ENCODE measurements at regions of chr12 and their contacts with region 1.

Region 1: GRCh38 chr12:91326058-91327027 is 143.7 kb upstream of the DCN start:
- DNase-seq: peak; percentile 13
- H3K4me3 Mint-ChIP-seq: no peak overlapping the region
- H3K27ac Mint-ChIP-seq: no peak overlapping the region
- H3K4me1 Mint-ChIP-seq: no peaks in the 10 kb centered on the region
- H3K27me3 Mint-ChIP-seq: peaks cover 2% of the 10 kb centered on the region

Region 2: GRCh38 chr12:90978117-90978770 is 348.1 kb before region 1 on chr12:
- CTCF ChIA-PET with region 1: interaction called, 9 read pairs
- POLR2A ChIA-PET with region 1: no interaction called
- intact Hi-C with region 1: loop called (anchors 1 kb)
- DNase-seq: no peak
- H3K4me3 Mint-ChIP-seq: no peak overlapping the region
- H3K27ac Mint-ChIP-seq: no peak overlapping the region
- H3K4me1 Mint-ChIP-seq: no peaks in the 10 kb centered on the region
- H3K27me3 Mint-ChIP-seq: no peaks in the 10 kb centered on the region

Region 3: DNA sequence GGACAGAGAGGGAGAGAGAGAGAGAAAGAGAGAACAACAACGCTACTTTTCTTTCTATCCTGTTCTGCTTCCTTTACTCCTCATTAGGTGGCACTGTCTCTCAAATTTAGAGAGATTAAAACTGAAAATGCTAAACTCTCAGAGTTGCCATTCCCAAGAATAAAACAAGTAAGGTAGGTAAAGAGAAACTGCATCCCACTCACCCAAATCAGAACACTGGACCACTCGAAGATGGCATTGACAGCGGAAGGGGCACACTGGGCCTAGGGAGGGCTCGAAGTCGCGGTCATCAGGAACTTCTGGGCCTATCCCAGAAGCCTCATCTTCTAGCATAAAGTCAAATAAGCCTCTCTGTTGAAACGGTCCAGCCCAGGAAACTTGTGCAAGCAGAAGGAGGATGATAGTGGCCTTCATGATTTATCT is 148.2 kb before region 1 on chr12:
- CTCF ChIA-PET with region 1: interaction called, 3 read pairs
- POLR2A ChIA-PET with region 1: no interaction called
- intact Hi-C with region 1: loop called (anchors 10 kb)
- DNase-seq: no peak
- H3K4me3 Mint-ChIP-seq: no peak overlapping the region
- H3K27ac Mint-ChIP-seq: no peak overlapping the region
- H3K4me1 Mint-ChIP-seq: no peaks in the 10 kb centered on the region
- H3K27me3 Mint-ChIP-seq: no peaks in the 10 kb centered on the region